Natural killer cell (primary cell): ENCODE measurements at regions of chr16 and their contacts with region 1.

Region 1: DNA sequence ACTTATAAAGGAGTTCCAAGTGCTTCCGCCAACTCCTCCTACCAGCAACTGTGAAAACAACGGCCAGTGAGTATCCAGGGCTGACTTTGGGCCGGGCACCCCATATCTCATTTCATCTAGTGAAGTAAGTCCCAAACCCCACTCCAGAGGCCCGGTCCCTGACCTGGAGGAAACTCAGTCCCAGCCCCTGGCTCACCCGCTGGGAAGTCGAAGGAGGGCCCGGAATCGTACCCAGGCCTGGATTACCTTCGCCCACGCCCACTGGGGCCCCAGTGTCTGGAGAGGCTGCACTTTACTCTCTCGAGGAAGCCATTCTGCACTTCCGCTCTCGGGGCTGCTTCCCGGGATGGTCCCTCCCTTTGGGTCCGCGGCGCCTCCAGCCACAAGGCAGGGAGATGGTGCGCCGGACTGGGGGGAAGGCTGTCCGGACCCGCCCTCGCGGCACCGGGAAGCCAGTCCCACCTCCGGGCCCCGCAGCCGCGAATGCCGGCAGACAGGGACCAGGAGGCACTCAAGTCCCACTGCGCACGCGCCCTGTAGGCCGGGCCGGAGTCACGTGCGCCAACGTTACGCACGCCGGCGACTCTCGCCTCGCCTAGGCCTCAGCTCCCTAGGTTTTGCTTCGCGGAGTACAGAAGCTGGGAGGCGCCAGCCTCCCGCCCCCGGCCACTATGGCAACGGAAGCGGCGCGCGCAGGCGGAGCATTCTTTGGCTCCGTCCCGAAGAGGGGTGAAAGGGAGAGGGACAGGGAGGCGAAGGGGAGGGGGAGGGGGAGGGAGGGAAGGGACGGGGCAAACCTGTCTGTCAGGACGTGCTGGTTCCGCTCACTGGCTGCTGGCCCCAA is at the start of gene CMTR2:
- DNase-seq: peak; percentile 84 to 95
- ATAC-seq: peak; percentile 83 to 94 (median 90)
- H3K4me3 ChIP-seq: peak within 1 kb of the TSS; percentile 94
- H3K4me3 Mint-ChIP-seq: peak within 1 kb of the TSS; percentile 86
- H3K27ac ChIP-seq: peak within 1 kb of the TSS; percentile 95
- H3K27ac Mint-ChIP-seq: peak within 1 kb of the TSS; percentile 80 to 84
- H3K4me1 ChIP-seq: peaks cover 6% of the 10 kb centered on the region
- H3K4me1 Mint-ChIP-seq: peaks cover 38 to 43% of the 10 kb centered on the region in 2 donors
- H3K27me3 ChIP-seq: peaks cover 3% of the 10 kb centered on the region
- H3K27me3 Mint-ChIP-seq: peaks cover 12 to 17% of the 10 kb centered on the region in 2 donors
- CTCF ChIP-seq: no peak
- total RNA-seq, gene CMTR2: 18.1 to 37.2 (median 23.1) TPM

Region 2: GRCh38 chr16:71258372-71258771 is 30.7 kb before region 1 on chr16:
- intact Hi-C with region 1: loop called (anchors 2 kb)
- DNase-seq: no peak
- ATAC-seq: no peak
- H3K4me3 ChIP-seq: no peak overlapping the region
- H3K4me3 Mint-ChIP-seq: peak overlapping the region; percentile 70
- H3K27ac ChIP-seq: no peak overlapping the region
- H3K27ac Mint-ChIP-seq: peak overlapping the region in 1 of 2 donors; percentile 61
- H3K4me1 ChIP-seq: peaks cover 26% of the 10 kb centered on the region
- H3K4me1 Mint-ChIP-seq: peaks cover 46 to 61% of the 10 kb centered on the region in 2 donors
- H3K27me3 ChIP-seq: no peaks in the 10 kb centered on the region
- H3K27me3 Mint-ChIP-seq: peaks cover 0 to 6% of the 10 kb centered on the region in 2 donors
- CTCF ChIP-seq: no peak

Region 3: GRCh38 chr16:71358464-71358998 is 69.4 kb after region 1 on chr16 and contains the start of gene CALB2:
- intact Hi-C with region 1: no loop called
- DNase-seq: peak; percentile 69 to 71
- ATAC-seq: peak; percentile 83 to 98 (median 96)
- H3K4me3 ChIP-seq: no peak within 1 kb of the TSS
- H3K4me3 Mint-ChIP-seq: peak within 1 kb of the TSS; percentile 6
- H3K27ac ChIP-seq: no peak within 1 kb of the TSS
- H3K27ac Mint-ChIP-seq: no peak within 1 kb of the TSS
- H3K4me1 ChIP-seq: peaks cover 9% of the 10 kb centered on the region
- H3K4me1 Mint-ChIP-seq: peaks cover 0 to 9% of the 10 kb centered on the region in 2 donors
- H3K27me3 ChIP-seq: peaks cover 8% of the 10 kb centered on the region
- H3K27me3 Mint-ChIP-seq: peaks cover 8 to 14% of the 10 kb centered on the region in 2 donors
- CTCF ChIP-seq: peak; percentile 98
- total RNA-seq, gene CALB2: not detected